Activated CD4-positive, alpha-beta T cell treated with anti-CD3 and anti-CD28 coated beads, Interleukin-2, amount 10 ng/mL, durations not matched to agents 24 days and 14 days (primary cell): ENCODE measurements at regions of chr19 and their contacts with region 1.

Region 1: DNA sequence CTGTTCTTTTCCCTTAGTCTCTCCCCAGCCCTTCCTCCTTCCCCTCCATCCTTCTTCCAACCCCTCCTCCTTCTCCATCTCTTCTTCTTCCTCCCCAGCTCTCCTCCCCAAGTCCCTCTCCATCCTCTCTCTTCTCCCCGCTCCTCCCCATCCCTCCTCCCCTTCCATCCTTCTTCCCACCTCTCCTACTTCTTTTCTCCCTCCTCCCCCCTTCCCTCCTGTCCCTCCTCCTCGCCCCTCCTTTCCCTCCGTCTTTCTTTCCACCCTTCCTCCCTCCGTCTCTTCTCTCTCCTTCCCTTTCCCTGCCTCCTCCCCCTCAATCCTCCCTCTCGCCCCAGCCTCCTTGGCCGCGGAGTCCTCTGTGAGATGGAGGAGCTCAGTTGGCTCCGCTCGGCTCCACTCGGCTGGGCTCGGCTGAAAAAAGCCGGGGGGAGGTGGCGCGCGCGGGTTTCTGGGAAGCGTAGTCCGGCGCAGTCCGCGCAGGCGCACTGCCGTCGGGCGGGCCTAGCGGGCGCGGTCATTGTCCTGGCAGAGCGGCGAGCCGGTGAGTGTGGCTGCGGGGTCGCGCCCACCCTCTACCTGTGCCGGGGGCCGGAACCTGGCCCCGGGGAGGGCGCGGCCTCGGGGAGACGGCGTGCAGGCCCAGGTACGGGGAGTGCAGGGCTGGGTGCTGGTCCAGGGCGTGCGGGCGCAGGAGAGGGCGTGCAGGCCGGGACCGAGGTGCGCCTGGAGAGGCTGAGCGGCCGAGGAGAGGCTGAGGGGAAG is at the start of gene ZNF71:
- DNase-seq: peak; percentile 96
- H3K4me3 Mint-ChIP-seq: peak within 1 kb of the TSS; percentile 90
- H3K27ac Mint-ChIP-seq: peak within 1 kb of the TSS; percentile 60
- H3K4me1 Mint-ChIP-seq: peaks cover 12% of the 10 kb centered on the region
- H3K27me3 Mint-ChIP-seq: no peaks in the 10 kb centered on the region
- total RNA-seq, gene ZNF71: 4.2 and 5.2 TPM in 2 replicates

Region 2: GRCh38 chr19:56356944-56357343 is 238.0 kb before region 1 on chr19:
- intact Hi-C with region 1: no loop called
- DNase-seq: no peak
- H3K4me3 Mint-ChIP-seq: no peak overlapping the region
- H3K27ac Mint-ChIP-seq: no peak overlapping the region
- H3K4me1 Mint-ChIP-seq: no peaks in the 10 kb centered on the region
- H3K27me3 Mint-ChIP-seq: no peaks in the 10 kb centered on the region

Region 3: DNA sequence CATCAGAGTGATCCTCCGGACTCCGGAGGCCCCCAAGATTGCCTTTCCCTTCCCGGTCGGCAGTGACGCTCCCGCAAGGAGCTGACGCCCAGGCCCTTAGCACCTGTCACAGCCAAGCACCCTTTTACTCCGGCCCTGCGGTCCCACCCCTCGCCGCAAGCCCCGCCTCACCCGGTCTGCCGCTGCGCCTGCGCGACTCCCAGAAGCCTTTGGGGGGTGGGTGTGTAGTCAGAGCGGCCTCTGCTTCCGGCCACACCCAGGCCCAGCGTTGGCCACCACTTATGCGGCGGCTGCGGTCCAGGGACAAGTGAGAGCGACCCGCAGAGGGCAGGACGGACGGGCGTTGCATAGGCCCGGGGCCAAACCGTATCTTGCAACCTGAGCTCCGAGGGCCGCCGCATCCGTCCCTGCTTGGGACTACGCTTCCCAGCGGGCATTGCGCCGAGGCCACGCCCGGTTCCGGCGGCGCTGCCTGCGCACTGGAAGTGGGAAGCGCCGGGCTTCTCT is 56.7 kb before region 1 on chr19:
- intact Hi-C with region 1: loop called (anchors 2 kb)
- DNase-seq: peak; percentile 95
- H3K4me3 Mint-ChIP-seq: peak overlapping the region; percentile 86
- H3K27ac Mint-ChIP-seq: peak overlapping the region; percentile 91
- H3K4me1 Mint-ChIP-seq: peaks cover 8% of the 10 kb centered on the region
- H3K27me3 Mint-ChIP-seq: no peaks in the 10 kb centered on the region

Region 4: DNA sequence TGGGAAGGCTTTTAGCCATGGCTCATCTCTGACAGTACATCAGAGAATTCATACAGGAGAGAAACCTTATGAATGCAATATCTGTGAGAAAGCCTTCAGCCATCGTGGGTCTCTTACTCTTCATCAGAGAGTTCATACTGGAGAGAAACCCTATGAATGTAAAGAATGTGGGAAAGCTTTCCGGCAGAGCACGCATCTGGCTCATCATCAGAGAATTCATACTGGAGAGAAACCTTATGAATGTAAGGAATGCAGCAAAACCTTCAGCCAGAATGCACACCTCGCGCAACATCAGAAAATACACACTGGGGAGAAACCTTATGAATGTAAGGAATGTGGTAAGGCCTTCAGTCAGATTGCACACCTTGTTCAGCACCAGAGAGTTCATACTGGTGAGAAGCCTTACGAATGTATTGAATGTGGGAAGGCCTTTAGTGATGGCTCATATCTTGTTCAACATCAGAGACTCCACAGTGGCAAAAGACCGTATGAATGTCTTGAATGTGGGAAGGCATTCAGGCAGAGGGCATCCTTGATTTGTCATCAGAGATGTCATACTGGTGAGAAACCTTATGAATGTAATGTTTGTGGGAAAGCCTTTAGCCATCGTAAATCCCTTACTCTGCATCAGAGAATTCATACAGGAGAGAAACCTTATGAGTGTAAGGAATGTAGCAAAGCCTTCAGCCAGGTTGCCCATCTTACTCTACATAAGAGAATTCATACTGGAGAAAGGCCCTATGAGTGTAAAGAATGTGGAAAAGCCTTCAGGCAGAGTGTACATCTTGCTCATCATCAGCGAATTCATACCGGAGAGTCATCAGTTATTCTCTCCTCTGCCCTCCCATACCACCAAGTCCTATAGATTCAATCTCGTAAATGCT is 17.0 kb before region 1 on chr19:
- intact Hi-C with region 1: no loop called
- DNase-seq: no peak
- H3K4me3 Mint-ChIP-seq: no peak overlapping the region
- H3K27ac Mint-ChIP-seq: no peak overlapping the region
- H3K4me1 Mint-ChIP-seq: no peaks in the 10 kb centered on the region
- H3K27me3 Mint-ChIP-seq: no peaks in the 10 kb centered on the region

Region 5: GRCh38 chr19:56608274-56608964 is 13.5 kb after region 1 on chr19:
- intact Hi-C with region 1: no loop called
- DNase-seq: no peak
- H3K4me3 Mint-ChIP-seq: no peak overlapping the region
- H3K27ac Mint-ChIP-seq: no peak overlapping the region
- H3K4me1 Mint-ChIP-seq: no peaks in the 10 kb centered on the region
- H3K27me3 Mint-ChIP-seq: no peaks in the 10 kb centered on the region

Region 6: DNA sequence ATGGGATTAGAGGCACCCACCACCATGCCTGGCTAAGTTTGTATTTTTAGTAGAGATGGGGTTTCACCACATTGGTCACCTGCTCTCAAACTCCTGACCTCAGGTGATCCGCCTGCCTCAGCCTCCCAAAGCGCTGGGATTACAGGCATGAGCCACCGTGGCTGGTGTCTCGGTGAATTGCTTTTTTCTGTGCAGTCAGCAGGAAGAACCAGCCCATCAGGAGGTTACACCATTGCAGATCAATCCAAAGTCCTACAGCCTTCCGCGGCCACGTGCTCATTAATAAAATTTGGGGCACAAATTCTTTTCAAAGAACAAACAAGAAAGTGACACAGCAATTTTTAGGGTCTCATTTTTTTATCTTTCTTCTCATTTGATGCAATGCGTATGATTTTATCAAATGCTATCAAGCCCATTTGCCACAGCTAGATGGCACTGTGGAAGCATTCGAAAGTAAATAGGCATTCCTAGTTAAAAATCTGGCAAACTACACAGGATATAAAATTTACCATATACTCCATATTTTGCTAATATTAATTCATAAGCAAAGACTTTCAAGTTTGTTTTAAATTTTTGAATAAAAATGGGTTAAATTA is 131.0 kb after region 1 on chr19:
- intact Hi-C with region 1: no loop called
- DNase-seq: no peak
- H3K4me3 Mint-ChIP-seq: no peak overlapping the region
- H3K27ac Mint-ChIP-seq: no peak overlapping the region
- H3K4me1 Mint-ChIP-seq: no peaks in the 10 kb centered on the region
- H3K27me3 Mint-ChIP-seq: no peaks in the 10 kb centered on the region